HEK293T (cell line): ENCODE measurements at regions of chr3 and their contacts with region 1.

Region 1: DNA sequence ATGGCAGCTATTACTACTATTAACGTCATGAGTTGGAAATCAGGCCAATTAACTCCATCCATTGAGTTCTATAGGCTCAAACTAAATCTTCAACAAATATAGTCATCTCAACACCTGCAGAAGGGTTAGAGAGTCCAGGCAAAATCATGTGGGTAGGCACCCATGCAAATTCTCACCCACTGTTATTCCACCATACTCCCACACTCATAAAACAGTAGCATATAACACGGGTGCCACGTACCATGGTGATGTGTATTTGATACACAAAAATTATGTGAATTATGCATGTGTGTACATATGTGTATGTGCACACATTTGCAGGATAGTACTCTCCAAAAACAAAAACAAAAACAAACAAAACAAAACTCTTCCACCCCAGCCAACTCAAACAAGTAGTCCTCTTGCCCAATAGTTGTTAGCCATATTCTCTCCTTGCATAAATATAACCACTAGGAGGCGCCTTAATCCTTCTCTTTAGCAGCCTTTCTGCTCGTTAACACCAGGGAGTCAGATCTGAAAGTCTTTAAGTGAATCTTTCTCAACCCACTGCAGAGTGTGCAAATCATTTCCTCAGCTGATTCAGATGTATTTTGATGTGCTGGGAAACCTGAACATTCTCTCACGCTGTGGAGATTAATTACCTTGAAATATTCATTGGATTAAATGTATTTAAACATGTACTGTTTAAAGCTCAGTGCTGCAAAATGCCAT is 38.0 kb upstream of the COPB2 start:
- DNase-seq: peak; percentile 65

Region 2: GRCh38 chr3:139187650-139188049 is 239.8 kb before region 1 on chr3:
- CTCF ChIA-PET with region 1: no interaction called
- POLR2A ChIA-PET with region 1: no interaction called
- DNase-seq: no peak

Region 3: GRCh38 chr3:139310474-139310933 is 116.9 kb before region 1 on chr3:
- CTCF ChIA-PET with region 1: no interaction called
- POLR2A ChIA-PET with region 1: no interaction called
- DNase-seq: no peak

Region 4: DNA sequence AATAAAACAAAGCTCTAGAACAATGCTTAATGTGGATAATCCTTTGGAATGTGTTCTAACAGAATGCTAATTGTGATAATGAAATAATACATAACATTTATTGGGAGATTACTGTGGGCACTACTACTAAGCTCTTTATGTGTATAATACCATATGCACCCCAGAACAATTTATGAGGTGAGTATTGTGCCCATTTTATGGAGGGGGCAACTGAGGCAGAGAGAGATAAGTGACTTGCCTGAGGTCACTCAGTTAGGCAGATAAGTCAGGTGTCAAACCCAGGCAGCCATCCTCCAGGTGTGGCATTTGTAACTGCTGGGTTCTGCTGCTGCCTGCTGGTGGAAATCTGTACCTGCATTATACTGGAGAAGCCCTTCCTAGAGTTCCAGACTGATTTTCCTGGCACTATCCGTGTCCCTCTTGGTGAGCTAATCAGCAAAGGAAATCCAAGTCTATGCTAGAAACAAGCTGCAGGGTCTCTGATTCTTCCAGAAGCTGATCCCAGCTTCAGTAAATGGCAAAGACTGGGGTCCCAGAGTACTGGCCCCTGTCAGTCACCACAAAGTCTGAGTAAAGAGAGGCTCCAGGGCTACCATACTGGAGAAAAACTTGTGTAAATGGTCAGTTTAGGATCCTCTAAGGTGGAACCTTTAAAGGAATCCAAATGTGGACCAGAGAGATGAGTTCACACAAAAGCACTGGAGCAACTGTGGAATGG is 134.7 kb after region 1 on chr3:
- CTCF ChIA-PET with region 1: interaction called, 20 read pairs
- POLR2A ChIA-PET with region 1: no interaction called
- DNase-seq: peak; percentile 63